ENCODE measurements at regions of chr12 and their contacts with region 1.

Region 1: DNA sequence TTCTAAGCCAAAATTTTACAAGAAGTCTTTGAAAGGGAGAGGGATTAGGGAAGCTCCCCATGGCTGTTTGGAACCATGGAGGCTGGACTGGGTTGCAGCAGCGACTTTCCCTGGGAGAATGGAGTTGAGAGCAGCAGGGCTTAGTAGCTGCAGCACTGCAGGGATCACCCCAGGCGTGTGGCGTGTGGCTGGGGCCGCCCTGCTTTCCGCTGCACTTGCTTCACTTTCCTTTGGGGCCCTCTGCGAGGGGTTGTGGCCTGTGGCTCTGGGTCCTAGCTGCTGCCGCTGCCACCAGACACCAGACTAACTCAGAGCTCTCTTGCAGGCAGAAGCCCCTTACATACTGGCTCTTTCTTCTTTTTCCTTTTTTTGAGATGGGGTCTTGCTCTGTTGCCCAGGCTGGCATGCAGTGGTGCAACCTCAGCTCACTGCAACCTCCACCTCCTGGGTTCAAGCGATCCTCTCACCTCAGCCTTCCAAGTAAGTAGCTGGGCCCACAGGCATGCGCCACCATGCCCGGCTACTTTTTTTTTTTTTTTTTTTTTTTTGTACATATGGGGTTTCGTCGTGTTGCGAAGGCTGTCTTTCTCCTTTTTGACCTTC is 25.4 kb downstream of the CCDC62 start:
- DNase-seq: no peak
- H3K4me3 ChIP-seq: no peak overlapping the region
- H3K4me3 Mint-ChIP-seq: no peak overlapping the region
- H3K27ac Mint-ChIP-seq: no peak overlapping the region
- H3K4me1 ChIP-seq: no peaks in the 10 kb centered on the region
- H3K4me1 Mint-ChIP-seq: no peaks in the 10 kb centered on the region
- H3K27me3 ChIP-seq: no peaks in the 10 kb centered on the region
- H3K27me3 Mint-ChIP-seq: no peaks in the 10 kb centered on the region
- CTCF ChIP-seq: no peak

Region 2: GRCh38 chr12:122785503-122785902 is 14.2 kb before region 1 on chr12:
- CTCF ChIA-PET with region 1: no interaction called
- POLR2A ChIA-PET with region 1: interaction called, 12 read pairs
- intact Hi-C with region 1: no loop called
- DNase-seq: no peak
- H3K4me3 ChIP-seq: no peak overlapping the region
- H3K4me3 Mint-ChIP-seq: no peak overlapping the region
- H3K27ac Mint-ChIP-seq: no peak overlapping the region
- H3K4me1 ChIP-seq: no peaks in the 10 kb centered on the region
- H3K4me1 Mint-ChIP-seq: no peaks in the 10 kb centered on the region
- H3K27me3 ChIP-seq: no peaks in the 10 kb centered on the region
- H3K27me3 Mint-ChIP-seq: no peaks in the 10 kb centered on the region
- CTCF ChIP-seq: no peak

Region 3: DNA sequence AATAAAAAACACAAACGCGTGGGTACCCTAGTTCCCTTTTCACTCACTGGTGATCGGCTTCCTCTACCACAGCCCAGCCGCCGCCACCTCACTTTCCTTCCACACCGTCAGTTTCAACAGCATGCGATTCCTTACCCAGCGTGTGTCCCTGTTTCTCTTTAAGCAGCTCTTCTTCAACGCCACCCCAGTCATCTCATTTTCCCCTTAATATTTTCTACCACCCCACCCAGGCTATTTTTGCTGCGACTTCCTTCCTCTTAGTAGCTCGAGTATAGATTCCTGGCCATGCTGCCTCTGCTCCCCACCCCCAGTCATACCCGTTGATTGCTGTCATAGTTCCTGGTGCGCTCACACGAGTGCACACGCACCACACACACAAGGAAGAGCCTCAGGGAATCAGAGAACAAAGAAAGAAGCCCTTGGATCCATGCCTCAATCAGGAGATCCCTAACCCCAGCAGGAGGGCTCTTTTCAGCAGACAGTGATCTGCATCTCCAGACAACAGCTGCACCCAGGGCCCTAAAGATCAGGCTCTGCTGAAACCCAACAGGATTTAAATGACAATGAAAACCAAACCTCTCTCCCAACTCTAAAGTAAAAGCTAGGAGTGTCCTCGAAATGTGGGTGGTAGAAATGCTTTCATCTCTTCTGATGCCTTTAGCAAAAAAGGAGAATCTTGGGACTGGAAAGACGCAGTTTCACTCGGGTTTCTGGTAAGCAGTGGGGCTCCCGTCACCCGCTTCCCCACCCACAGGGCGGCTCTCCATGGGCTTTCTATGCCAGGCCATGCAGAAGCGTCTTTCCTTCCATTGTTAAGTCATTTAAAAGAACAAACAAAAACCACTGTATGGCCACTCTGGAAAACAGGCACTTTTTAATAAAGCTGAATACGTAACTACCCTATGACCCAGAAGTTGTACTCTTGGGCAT is 72.4 kb after region 1 on chr12:
- CTCF ChIA-PET with region 1: no interaction called
- POLR2A ChIA-PET with region 1: no interaction called
- intact Hi-C with region 1: no loop called
- DNase-seq: no peak
- H3K4me3 ChIP-seq: no peak overlapping the region
- H3K4me3 Mint-ChIP-seq: no peak overlapping the region
- H3K27ac Mint-ChIP-seq: peak overlapping the region; percentile 30
- H3K4me1 ChIP-seq: no peaks in the 10 kb centered on the region
- H3K4me1 Mint-ChIP-seq: peaks cover 7% of the 10 kb centered on the region
- H3K27me3 ChIP-seq: no peaks in the 10 kb centered on the region
- H3K27me3 Mint-ChIP-seq: no peaks in the 10 kb centered on the region
- CTCF ChIP-seq: no peak